Activated CD8-positive, alpha-beta T cell treated with anti-CD3 and anti-CD28 coated beads for 36 hours (primary cell): ENCODE measurements at regions of chr5 and their contacts with region 1.

Region 1: DNA sequence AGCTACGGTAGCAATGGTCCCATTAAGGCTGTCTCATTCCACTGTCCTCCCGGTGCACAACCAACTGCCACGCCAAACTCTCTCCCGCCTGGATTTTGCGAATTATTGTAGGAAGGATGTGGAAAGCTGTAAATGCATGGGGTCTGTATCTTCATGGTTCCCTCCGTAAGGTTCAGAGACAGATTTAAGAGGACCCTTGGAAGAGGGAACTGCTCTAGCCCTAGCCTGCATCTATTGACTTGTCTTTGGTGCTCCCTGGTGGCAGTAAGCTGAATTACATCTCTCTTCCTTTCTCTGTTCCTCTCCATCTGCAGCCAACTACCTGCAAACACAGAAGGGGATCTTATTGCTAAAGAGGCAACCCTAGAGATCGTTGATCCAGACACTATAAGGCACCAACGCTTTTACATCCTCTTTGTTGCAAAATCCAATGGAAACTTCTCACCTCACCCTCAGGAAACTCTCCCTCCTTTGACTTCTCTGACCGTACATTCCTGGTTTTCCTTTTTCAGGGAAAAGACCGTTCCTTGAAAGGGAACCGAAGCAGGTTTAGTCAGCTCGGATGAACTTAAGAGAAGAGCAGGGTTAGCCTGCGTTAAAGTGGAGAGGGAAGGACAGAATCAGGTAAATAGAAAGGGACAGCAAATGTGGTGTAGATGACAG is 11.9 kb downstream of the CAPSL start:
- DNase-seq: peak; percentile 79
- ATAC-seq: peak; percentile 63
- H3K4me3 Mint-ChIP-seq: peak overlapping the region; percentile 10
- H3K27ac Mint-ChIP-seq: no peak overlapping the region
- H3K4me1 Mint-ChIP-seq: peaks cover 38% of the 10 kb centered on the region
- H3K27me3 Mint-ChIP-seq: no peaks in the 10 kb centered on the region
- CTCF ChIP-seq: peak; percentile 94

Region 2: DNA sequence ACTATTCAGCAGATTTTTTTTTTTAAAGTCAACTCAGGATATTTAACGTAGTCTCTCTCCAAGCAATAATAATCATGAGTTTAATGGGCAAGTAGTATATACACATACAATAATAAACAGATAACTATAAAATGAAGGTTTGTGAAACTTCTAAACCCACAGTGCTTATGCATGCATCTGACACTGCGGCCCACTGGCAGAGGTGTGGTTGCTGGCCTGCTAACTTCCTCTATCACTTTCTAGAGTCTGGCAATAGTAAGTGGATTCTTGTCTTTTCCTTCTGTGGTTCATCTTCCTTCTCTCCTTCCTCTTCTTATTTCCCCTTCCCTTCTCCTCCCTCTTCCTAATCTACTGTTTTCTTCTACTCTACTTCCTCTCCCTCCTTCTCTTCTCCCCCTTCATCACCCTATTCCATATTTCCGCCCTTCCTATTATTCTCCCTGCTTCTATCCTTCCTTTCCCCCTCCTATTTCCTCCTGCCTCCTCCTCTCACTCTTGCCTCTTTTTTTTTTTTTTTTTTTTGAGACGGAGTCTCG is 860.2 kb before region 1 on chr5:
- CTCF ChIA-PET with region 1: no interaction called
- POLR2A ChIA-PET with region 1: no interaction called
- intact Hi-C with region 1: no loop called
- DNase-seq: no peak
- ATAC-seq: no peak
- H3K4me3 Mint-ChIP-seq: no peak overlapping the region
- H3K27ac Mint-ChIP-seq: no peak overlapping the region
- H3K4me1 Mint-ChIP-seq: no peaks in the 10 kb centered on the region
- H3K27me3 Mint-ChIP-seq: peaks cover 24% of the 10 kb centered on the region
- CTCF ChIP-seq: no peak

Region 3: DNA sequence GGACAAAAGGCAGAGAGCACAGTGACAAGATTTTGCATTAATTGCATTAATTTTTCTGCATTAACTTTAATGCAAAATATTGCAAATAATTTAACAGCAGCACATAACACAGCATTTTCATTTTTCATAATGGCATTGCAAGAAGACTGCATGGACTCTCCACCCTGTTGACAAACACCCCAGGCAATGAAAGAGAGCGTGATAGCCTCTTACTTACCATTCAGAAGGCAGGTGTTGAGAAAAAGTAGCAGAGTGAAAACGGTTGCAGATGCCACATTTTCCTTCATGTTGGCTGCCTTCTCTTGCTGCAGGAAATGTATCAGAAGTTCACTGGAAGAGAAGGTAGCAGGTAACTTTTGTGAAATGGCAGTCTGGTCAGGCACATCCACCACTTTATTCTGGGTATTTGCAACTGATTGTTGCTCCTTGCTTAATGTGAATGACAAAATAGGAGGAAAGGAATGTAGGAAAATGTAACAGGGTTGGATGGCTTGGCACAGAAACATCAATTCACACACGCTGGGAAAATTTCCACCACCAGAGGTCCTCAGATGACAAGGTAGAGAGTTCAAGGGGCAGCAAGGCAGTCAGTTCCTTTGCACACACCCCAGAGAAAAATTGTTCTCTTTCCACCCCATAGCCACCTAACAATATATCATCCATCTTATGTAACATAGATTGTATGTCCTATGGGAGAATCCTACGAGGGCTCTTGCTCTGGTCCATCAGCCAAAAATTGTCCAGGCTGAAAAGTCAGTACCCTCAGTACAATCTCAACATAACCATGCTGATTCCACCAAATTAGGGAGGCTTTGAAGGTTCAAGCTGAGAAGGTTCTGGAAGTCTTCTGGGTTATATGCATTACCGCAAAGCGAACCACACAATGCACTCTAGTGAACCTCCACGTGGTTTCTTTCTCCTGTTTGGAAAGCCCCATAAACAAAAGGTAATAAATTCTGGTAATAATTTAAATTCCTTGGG is 836.9 kb before region 1 on chr5:
- CTCF ChIA-PET with region 1: interaction called, 14 read pairs
- POLR2A ChIA-PET with region 1: no interaction called
- intact Hi-C with region 1: loop called (anchors 5 kb)
- DNase-seq: peak; percentile 68
- ATAC-seq: peak; percentile 53
- H3K4me3 Mint-ChIP-seq: no peak overlapping the region
- H3K27ac Mint-ChIP-seq: no peak overlapping the region
- H3K4me1 Mint-ChIP-seq: no peaks in the 10 kb centered on the region
- H3K27me3 Mint-ChIP-seq: peaks cover 3% of the 10 kb centered on the region
- CTCF ChIP-seq: peak; percentile 61

Region 4: GRCh38 chr5:35644543-35644942 is 282.0 kb before region 1 on chr5:
- CTCF ChIA-PET with region 1: interaction called, 151 read pairs
- POLR2A ChIA-PET with region 1: no interaction called
- intact Hi-C with region 1: no loop called
- DNase-seq: no peak
- ATAC-seq: peak; percentile 53
- H3K4me3 Mint-ChIP-seq: no peak overlapping the region
- H3K27ac Mint-ChIP-seq: no peak overlapping the region
- H3K4me1 Mint-ChIP-seq: no peaks in the 10 kb centered on the region
- H3K27me3 Mint-ChIP-seq: no peaks in the 10 kb centered on the region
- CTCF ChIP-seq: no peak

Region 5: GRCh38 chr5:35657877-35658276 is 268.6 kb before region 1 on chr5:
- CTCF ChIA-PET with region 1: interaction called, 10 read pairs
- POLR2A ChIA-PET with region 1: no interaction called
- intact Hi-C with region 1: no loop called
- DNase-seq: no peak
- ATAC-seq: no peak
- H3K4me3 Mint-ChIP-seq: no peak overlapping the region
- H3K27ac Mint-ChIP-seq: peak overlapping the region; percentile 5
- H3K4me1 Mint-ChIP-seq: peaks cover 24% of the 10 kb centered on the region
- H3K27me3 Mint-ChIP-seq: no peaks in the 10 kb centered on the region
- CTCF ChIP-seq: no peak

Region 6: DNA sequence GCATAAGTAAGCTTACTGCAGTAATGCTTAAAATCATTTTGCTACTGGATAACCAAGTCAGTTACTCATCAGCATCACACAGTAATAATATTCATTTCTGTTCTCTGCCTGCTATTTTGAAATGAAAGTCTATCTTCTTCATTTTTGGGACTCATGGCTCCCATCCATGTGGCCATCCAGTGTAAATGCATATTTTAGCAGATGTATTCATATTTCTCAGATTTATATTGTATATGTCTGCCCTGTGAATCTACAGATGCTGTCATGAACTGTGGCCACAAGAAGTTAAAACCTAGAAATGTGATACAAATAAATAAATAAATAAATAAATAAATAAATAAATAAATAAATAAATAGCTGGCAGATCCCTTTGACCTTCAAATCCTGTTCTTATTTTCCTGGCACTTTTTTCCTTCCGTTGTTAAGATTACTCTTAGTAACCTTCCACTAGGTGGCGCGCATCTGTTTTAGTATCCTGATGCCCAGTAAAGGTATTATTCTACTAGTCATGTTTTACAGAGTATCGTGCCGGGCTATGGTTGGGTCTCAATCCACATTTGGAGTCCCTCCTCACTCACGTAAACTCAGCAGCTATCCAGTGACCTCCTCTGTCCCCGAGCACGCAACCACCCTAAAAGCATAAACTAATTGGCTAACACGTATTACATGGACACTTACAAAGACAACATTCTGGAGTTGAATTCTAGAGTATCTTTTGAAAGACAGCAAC is 149.0 kb before region 1 on chr5:
- CTCF ChIA-PET with region 1: interaction called, 77 read pairs
- POLR2A ChIA-PET with region 1: interaction called, 4 read pairs
- intact Hi-C with region 1: loop called (anchors 2 kb)
- DNase-seq: peak; percentile 88
- ATAC-seq: peak; percentile 48
- H3K4me3 Mint-ChIP-seq: peak overlapping the region; percentile 3
- H3K27ac Mint-ChIP-seq: peak overlapping the region; percentile 91
- H3K4me1 Mint-ChIP-seq: peaks cover 67% of the 10 kb centered on the region
- H3K27me3 Mint-ChIP-seq: no peaks in the 10 kb centered on the region
- CTCF ChIP-seq: peak; percentile 94

Region 7: DNA sequence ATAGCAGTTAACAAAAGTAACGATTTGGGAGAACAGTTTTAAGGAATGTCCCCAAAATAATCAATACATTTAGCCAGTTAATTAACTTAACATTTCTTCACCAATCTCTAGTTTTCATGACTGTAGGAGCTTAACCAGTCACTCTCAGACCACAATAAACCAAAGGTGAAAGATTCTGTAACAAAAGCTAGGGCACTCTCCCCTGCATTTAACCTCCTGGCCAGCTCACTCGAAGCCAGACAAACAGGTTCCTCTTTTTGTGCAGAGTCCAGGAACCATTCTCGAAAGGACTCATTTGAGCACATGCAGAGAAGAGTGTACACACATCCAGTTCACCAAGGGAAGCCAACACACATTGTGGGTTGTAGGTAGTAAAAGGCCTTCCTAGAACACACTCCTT is 63.4 kb before region 1 on chr5:
- CTCF ChIA-PET with region 1: interaction called, 101 read pairs
- POLR2A ChIA-PET with region 1: interaction called, 168 read pairs
- intact Hi-C with region 1: no loop called
- DNase-seq: peak; percentile 45
- ATAC-seq: peak; percentile 52
- H3K4me3 Mint-ChIP-seq: peak overlapping the region; percentile 95
- H3K27ac Mint-ChIP-seq: peak overlapping the region; percentile 97
- H3K4me1 Mint-ChIP-seq: peaks cover 80% of the 10 kb centered on the region
- H3K27me3 Mint-ChIP-seq: no peaks in the 10 kb centered on the region
- CTCF ChIP-seq: no peak

Region 8: DNA sequence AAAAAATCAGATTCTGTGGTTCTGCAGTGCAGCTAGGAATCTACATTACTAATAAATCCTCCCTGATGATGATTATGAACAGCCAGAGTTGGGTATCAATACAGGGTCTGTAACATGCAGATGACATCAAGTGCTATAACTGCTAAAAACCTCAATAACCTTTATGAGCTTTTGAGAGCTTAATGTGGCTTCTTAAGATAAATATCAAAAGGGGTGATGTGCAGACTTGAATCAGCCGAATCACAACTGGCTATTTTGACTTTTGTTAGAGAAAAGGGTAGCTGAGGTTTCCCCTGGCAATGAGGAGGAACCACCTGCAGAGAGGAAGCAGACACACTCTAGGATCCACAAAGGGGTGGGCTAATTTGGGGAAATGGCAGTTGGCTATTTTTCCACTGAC is 18.3 kb before region 1 on chr5:
- CTCF ChIA-PET with region 1: interaction called, 16 read pairs
- POLR2A ChIA-PET with region 1: interaction called, 8 read pairs
- intact Hi-C with region 1: loop called (anchors 2 kb)
- DNase-seq: peak; percentile 50
- ATAC-seq: peak; percentile 50
- H3K4me3 Mint-ChIP-seq: peak overlapping the region; percentile 26
- H3K27ac Mint-ChIP-seq: peak overlapping the region; percentile 87
- H3K4me1 Mint-ChIP-seq: peaks cover 70% of the 10 kb centered on the region
- H3K27me3 Mint-ChIP-seq: no peaks in the 10 kb centered on the region
- CTCF ChIP-seq: no peak